Activated CD4-positive, alpha-beta memory T cell treated with anti-CD3 and anti-CD28 coated beads for 36 hours (primary cell): ENCODE measurements at regions of chr12 and their contacts with region 1.

Region 1: DNA sequence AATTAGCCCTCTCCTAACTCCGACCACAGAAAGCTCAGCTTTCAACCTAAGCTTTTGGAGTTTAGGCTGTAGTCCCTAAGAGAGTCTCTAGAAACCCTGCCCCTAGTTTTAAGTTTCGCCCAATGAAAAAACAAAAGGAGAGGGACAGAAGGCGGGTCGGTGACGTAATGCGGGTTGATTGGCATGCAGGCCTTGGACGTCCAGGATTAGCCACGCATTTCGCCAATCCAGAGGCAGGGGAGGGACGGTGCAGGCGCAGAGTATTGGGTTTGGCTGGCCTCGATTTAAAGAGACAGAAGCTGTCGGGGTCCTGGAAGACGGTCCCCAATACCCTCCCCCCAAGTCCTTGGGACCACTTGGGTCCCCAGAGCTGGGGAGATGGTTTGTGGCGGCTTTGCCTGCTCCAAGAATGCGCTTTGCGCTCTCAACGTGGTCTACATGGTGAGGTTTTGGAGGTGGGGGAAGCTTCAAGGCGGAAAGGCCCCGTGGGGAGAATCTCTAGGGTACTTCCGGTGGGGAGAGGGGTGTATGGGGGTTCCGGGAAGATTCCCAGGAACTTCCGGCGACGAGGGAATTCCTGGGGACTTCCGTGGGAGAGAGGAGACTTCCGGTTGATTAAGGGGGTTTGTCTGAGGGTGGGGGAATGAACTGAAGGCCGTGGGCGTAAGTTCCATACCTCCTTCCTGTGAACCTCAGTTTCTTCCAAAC is at the start of gene TSPAN31:
- DNase-seq: peak; percentile 98
- H3K4me3 Mint-ChIP-seq: peak within 1 kb of the TSS; percentile 93
- H3K27ac Mint-ChIP-seq: peak within 1 kb of the TSS; percentile 88
- H3K4me1 Mint-ChIP-seq: peaks cover 50% of the 10 kb centered on the region
- H3K27me3 Mint-ChIP-seq: no peaks in the 10 kb centered on the region
- total RNA-seq, gene TSPAN31: 11.7 to 15.0 TPM

Region 2: DNA sequence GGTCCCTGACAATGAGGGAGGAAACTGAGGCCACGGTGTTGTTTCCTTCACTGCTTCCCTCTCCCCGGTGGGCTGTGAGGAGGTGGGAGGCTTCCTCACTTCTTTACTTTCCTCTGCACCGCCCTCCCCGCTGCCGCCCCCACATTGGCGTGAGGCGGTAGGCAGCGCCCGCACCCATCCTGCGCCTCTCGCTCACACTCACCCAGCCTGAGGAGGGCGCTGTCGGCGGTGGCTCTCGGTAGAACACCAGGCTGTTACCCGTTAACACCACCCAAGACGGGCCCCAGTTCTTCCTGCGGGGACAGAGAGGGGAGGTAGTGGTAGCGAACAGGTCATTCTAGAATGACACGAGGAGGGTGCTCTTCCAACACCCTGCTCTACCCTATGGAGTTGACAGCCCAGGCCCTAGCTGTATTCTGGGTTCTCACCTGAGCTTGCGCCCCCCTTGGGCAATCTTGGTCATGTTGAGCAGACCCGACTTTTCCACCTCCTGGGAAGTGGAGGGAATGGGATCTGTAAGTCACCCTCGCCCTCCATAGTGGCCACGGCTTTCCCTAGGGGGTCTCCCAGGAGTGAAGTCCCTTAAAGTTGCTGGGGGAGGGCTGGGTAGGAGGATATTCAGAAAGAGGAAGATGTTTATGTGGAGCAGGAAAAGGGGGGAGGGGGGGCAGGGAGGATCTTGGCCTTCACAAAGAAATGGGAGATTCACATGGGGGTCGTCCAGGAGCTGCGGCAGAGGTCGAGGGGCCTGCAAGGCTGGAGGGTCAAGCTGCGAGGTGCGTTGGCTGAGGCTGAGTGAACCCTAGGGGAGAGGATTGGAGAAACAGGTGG is 268.6 kb before region 1 on chr12:
- CTCF ChIA-PET with region 1: no interaction called
- POLR2A ChIA-PET with region 1: no interaction called
- intact Hi-C with region 1: loop called (anchors 2 kb)
- DNase-seq: peak; percentile 94
- H3K4me3 Mint-ChIP-seq: peak overlapping the region; percentile 87
- H3K27ac Mint-ChIP-seq: peak overlapping the region; percentile 99
- H3K4me1 Mint-ChIP-seq: peaks cover 60% of the 10 kb centered on the region
- H3K27me3 Mint-ChIP-seq: no peaks in the 10 kb centered on the region

Region 3: GRCh38 chr12:57511588-57512325 is 233.2 kb before region 1 on chr12:
- CTCF ChIA-PET with region 1: no interaction called
- POLR2A ChIA-PET with region 1: no interaction called
- intact Hi-C with region 1: no loop called
- DNase-seq: no peak
- H3K4me3 Mint-ChIP-seq: no peak overlapping the region
- H3K27ac Mint-ChIP-seq: peak overlapping the region; percentile 42
- H3K4me1 Mint-ChIP-seq: peaks cover 2% of the 10 kb centered on the region
- H3K27me3 Mint-ChIP-seq: no peaks in the 10 kb centered on the region

Region 4: GRCh38 chr12:57546438-57547383 is 198.2 kb before region 1 on chr12 and contains the start of gene DCTN2:
- CTCF ChIA-PET with region 1: no interaction called
- POLR2A ChIA-PET with region 1: no interaction called
- intact Hi-C with region 1: loop called (anchors 5 kb)
- DNase-seq: peak; percentile 98
- H3K4me3 Mint-ChIP-seq: peak within 1 kb of the TSS; percentile 97
- H3K27ac Mint-ChIP-seq: peak within 1 kb of the TSS; percentile 87
- H3K4me1 Mint-ChIP-seq: peaks cover 49% of the 10 kb centered on the region
- H3K27me3 Mint-ChIP-seq: peaks cover 5% of the 10 kb centered on the region
- total RNA-seq, gene DCTN2: 81.0 to 85.2 TPM

Region 5: DNA sequence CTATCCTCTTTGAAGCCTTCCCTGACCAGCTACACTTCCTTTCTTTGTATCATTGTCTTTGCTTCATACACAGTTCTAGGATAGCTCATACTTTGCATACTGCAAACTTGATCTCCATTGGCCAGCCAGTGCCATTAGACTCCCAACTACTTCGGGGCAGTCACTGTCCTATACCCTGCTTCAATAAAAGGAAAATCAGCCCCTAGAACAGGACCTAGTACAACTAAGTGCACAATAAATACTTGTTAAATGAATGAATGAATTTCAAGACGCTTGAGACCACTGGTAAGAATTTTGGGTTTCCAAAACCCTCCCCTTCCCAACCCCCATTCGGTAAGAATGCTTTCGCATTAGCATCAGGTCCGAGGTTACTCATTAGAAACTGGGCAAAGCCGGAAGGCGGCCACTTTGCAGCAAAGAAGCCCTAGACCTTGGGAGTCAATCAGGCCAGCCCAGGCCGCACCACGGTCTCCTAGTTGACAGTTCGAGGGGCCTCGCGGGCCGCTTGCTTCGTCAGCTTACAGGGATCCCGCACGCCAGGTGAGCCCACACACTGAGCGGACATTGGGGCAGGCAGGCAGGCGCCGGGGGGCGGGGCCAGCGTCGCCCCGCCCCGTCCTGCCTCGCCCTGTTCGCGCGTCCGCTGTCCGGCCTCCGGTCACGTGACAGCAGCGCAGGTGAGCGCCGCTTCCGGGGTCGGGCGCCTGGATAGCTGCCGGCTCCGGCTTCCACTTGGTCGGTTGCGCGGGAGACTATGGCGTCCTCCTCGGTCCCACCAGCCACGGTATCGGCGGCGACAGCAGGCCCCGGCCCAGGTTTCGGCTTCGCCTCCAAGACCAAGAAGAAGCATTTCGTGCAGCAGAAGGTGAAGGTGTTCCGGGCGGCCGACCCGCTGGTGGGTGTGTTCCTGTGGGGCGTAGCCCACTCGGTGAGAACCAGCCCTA is 154.1 kb before region 1 on chr12 and contains the start of gene PIP4K2C:
- CTCF ChIA-PET with region 1: no interaction called
- POLR2A ChIA-PET with region 1: no interaction called
- intact Hi-C with region 1: loop called (anchors 1 kb)
- DNase-seq: peak; percentile 89
- H3K4me3 Mint-ChIP-seq: peak within 1 kb of the TSS; percentile 84
- H3K27ac Mint-ChIP-seq: peak within 1 kb of the TSS; percentile 70
- H3K4me1 Mint-ChIP-seq: peaks cover 21% of the 10 kb centered on the region
- H3K27me3 Mint-ChIP-seq: no peaks in the 10 kb centered on the region
- total RNA-seq, gene PIP4K2C: 17.8 to 20.6 TPM

Region 6: DNA sequence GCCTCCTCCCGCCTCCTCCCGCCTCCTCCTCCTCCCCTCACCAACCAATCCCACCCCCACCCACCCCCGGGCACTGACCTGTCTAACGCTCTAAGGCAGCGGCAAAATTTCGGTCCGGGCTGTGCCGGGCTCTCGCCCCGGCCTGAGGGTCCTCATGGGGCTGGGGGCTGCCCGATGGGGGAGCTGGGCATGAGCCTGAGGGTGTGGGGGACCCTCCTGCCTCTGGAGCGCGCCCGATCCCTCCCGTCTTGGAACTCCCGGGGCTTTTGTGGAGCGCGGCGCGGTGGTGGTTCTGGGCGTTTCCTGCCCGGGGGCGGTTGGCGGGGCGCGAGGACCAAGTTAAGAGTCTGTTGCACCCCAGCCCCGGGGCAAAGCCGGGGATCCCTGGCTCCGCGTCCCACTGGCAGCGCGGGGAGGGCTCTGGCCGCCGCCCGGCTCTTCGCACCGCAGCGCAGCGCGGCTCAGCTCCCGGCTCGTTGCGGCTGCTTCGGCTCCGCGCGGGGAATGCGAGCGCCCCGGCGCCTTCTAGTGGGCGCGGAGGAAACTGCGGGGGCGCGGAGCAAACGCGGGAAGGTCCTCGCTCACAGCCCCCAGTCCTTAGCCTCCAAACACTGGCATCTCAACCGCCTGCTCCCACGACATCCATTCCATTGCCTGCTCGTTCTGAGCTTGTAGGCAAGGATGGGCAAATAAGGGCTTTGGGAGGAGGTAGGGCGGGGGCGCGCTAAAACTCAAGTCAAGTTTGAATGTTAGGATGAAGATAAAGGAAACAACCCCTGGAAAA is 112.0 kb before region 1 on chr12 and contains the start of gene B4GALNT1:
- CTCF ChIA-PET with region 1: interaction called, 7 read pairs
- POLR2A ChIA-PET with region 1: interaction called, 3 read pairs
- intact Hi-C with region 1: loop called (anchors 5 kb)
- DNase-seq: peak; percentile 73
- H3K4me3 Mint-ChIP-seq: peak within 1 kb of the TSS; percentile 71
- H3K27ac Mint-ChIP-seq: no peak within 1 kb of the TSS
- H3K4me1 Mint-ChIP-seq: peaks cover 11% of the 10 kb centered on the region
- H3K27me3 Mint-ChIP-seq: peaks cover 43% of the 10 kb centered on the region
- total RNA-seq, gene B4GALNT1: 1.7 to 2.1 TPM

Region 7: DNA sequence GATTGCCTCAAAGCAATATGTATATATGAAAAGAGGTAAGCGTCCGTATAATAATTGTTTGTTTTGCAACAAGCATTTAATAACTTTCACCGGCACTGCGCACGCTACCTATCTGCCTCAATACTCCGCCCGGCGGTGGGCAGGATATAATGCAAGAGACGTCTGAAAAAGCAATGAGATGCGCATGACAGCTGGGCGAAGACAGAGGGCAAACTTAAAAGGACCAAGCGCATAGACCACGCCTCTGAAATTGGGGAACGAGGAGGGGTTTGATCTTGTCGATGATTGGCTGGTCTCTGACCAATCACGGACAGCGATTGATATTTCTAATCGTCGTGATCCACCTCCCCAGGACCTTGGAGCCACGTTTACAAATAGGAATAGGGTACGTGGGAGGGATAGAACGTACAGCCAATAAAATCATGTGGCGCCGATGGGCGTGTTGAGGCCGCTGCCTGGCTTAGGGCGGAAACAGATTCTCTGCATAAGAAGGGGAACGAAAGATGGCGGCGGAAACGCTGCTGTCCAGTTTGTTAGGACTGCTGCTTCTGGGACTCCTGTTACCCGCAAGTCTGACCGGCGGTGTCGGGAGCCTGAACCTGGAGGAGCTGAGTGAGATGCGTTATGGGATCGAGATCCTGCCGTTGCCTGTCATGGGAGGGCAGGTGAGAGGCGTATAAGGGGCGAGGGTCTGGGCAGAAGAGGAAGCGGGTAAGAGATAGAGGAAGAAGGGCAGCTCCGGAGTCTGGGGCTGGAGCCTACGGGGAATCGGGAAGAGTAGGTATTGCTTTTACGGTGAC is 51.1 kb before region 1 on chr12 and contains the start of gene OS9:
- CTCF ChIA-PET with region 1: interaction called, 13 read pairs
- POLR2A ChIA-PET with region 1: interaction called, 11 read pairs
- intact Hi-C with region 1: loop called (anchors 1 kb)
- DNase-seq: peak; percentile 97
- H3K4me3 Mint-ChIP-seq: no peak within 1 kb of the TSS
- H3K27ac Mint-ChIP-seq: no peak within 1 kb of the TSS
- H3K4me1 Mint-ChIP-seq: no peaks in the 10 kb centered on the region
- H3K27me3 Mint-ChIP-seq: peaks cover under 1% of the 10 kb centered on the region
- total RNA-seq, gene OS9: 73.4 to 74.8 TPM